Cardiac septum (tissue), 1 donor: ENCODE measurements at regions of chr13 and their contacts with region 1.

Region 1: GRCh38 chr13:80342471-80343380 is 1.8 kb upstream of the SPRY2 start:
- DNase-seq: peak; percentile 96

Region 2: DNA sequence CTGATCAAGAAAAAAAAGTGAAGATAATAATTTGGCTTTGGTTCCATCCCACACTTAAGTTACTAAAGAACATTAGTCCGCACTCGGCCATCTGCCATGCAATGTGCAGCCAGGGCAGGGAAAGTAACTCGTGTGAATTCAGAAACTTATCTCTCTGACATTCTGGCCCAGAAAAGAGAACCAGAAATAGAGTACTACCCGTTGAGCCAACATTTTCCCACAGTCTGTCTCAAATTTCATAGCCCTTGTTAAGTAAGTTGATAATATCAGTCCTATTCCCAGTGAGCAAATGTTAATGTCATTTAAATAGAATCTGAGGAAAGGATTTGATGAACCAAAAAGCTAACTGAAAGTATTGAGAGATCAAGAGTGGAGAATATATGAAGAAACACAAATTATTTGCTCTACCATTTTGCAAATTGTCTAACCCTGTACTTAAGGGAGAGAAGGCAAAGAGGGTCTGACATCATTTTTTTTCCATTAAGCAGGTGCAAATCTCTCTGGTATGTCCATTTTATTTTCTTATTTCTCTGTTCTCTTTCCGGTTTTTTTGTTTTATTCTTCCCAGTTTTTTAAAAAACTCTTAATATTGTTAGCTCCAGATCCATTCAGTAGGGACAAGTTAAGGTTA is 705.5 kb before region 1 on chr13:
- intact Hi-C with region 1: loop called (anchors 5 kb)
- DNase-seq: peak; percentile 76

Region 3: GRCh38 chr13:79679334-79679733 is 663.4 kb before region 1 on chr13:
- intact Hi-C with region 1: loop called (anchors 5 kb)
- DNase-seq: no peak

Region 4: DNA sequence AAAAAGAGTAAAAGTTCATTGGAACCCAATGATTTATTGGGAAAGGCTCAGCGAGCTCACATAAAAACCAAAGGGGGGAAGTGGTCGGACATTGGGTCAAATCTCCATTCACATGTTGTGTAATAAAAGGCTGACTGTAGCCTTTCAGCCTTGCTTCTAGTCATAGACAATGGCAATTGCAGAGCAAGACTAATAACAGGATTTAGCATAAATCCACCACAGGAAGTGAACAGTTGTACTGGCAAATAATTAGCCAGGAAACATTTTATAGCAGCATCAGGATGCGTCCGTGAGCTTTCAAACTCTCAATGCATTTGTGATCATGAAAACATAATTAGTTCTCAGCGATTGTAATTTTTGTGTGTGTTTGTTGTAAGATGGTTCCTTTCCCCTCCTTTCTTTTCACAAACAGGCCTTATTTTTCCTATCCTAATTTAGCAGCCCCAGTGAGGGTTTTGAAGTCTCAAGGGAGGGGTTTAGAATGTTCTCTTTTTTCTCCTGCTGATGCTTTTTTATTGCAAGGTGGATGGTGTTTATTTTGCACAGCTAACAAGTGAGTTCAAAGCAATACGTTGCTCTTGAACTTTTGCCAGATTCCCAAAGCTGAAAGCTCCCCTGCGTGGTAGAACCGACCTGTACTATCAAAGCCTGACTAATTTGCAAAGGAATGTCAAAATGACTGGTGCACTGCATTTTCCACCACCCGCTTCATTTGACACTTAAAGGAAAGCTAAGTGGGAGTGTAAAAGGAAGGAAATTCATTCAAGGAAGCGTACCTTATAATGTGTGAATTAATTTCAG is 107.4 kb before region 1 on chr13:
- intact Hi-C with region 1: no loop called
- DNase-seq: no peak

Region 5: GRCh38 chr13:80276371-80277289 is 66.1 kb before region 1 on chr13:
- intact Hi-C with region 1: loop called (anchors 2 kb)
- DNase-seq: no peak

Region 6: GRCh38 chr13:80469853-80470381 is 127.2 kb after region 1 on chr13:
- intact Hi-C with region 1: loop called (anchors 10 kb)
- DNase-seq: peak; percentile 83

Region 7: DNA sequence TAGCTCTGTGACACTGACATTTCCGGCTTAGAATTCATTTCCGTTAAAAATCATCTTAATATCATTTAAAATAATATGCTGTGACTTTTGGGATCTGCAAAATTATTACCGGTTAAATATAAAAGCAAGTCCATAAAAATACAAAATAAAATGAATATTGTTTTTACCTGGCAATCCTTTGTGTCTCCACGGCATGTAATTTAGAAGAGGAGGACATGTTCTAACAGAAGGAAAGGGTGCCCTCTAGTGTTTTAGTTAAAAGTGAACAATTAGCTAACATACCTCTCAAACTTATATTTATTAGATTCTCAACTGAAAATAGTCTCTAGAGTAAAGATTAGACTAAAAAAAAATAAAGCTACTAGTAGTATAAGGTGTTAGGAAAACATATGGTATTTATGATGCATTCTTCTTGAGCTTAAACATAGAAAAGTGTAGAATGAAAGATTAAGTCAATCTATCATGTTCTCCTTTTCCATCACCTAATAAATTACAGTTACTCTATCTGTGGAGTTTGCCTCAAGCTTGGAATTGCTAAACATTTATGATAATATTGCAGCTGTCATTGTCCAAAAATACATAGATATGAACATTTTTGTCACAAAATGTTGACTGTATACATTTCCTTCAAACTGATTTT is 674.9 kb after region 1 on chr13:
- intact Hi-C with region 1: loop called (anchors 5 kb)
- DNase-seq: no peak